Naive thymus-derived CD4-positive, alpha-beta T cell (primary cell): ENCODE measurements at regions of chr1 and their contacts with region 1.

Region 1: GRCh38 chr1:151024540-151025146 is 11.7 kb upstream of the BNIPL start:
- DNase-seq: peak; percentile 72 to 91 (median 83)
- ATAC-seq: peak; percentile 100
- H3K4me3 ChIP-seq: no peak overlapping the region
- H3K4me3 Mint-ChIP-seq: peak overlapping the region; percentile 16 to 73 (median 61)
- H3K27ac ChIP-seq: no peak overlapping the region
- H3K27ac Mint-ChIP-seq: peak overlapping the region; percentile 37 to 93 (median 74)
- H3K4me1 ChIP-seq: no peaks in the 10 kb centered on the region
- H3K4me1 Mint-ChIP-seq: peaks cover 4 to 22% (median 6%) of the 10 kb centered on the region in 7 donors
- H3K27me3 ChIP-seq: no peaks in the 10 kb centered on the region
- H3K27me3 Mint-ChIP-seq: no peaks in the 10 kb centered on the region

Region 2: DNA sequence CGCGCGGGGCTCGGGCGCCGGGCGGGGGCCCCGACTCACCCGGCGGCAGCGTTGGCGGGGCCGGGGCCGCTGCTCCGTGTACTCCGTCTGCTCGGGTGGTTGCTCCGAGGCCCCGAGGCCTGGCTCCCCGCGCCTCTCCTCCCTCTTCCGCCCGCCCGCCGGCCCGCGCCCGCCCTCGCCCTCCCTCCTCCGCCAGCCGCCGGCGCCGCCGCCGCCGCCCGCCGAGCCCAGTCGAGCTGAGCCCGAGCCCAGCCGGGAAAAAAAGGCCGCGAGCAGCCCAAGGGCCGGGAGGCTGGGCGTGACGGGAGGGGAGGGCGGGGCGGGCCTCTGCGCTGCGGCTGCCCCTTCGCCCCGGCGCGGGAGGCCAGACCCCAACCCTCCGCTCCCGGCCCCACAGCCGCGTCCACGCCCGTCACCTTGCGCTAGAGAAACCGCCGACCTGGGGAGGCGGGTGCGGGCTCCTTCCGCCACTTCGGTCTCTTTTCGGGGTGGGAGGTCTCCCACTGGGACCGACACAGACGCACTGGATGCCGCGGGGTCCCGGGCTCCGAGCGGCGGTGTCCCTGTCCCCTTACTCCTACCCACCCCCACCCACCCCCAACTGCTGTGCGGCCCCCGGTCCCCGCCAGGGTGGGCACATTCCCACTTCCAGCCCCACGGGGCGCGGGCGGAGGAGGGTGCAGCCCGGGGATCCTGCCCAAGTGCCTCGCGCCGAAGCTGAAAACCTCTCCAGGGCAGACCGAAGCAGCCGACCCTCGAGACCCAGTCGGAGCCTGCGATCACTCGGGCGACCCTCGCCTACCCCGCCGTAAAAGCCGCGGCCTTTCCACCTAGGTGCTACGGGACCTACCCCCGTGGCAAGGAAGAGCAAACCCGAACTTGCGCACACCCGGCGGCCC is 49.8 kb before region 1 on chr1 and contains the start of gene CERS2:
- CTCF ChIA-PET with region 1: no interaction called
- POLR2A ChIA-PET with region 1: no interaction called
- intact Hi-C with region 1: no loop called
- DNase-seq: peak; percentile 72 to 84 (median 77)
- ATAC-seq: peak; percentile 77
- H3K4me3 ChIP-seq: peak within 1 kb of the TSS; percentile 82
- H3K4me3 Mint-ChIP-seq: peak within 1 kb of the TSS; percentile 83 to 94 (median 89)
- H3K27ac ChIP-seq: peak within 1 kb of the TSS; percentile 92
- H3K27ac Mint-ChIP-seq: peak within 1 kb of the TSS; percentile 86 to 94 (median 91)
- H3K4me1 ChIP-seq: peaks cover 48 to 62% of the 10 kb centered on the region in 2 donors
- H3K4me1 Mint-ChIP-seq: peaks cover 36 to 82% (median 74%) of the 10 kb centered on the region in 7 donors
- H3K27me3 ChIP-seq: no peaks in the 10 kb centered on the region
- H3K27me3 Mint-ChIP-seq: no peaks in the 10 kb centered on the region
- total RNA-seq, gene CERS2: 101 to 169 (median 136) TPM

Region 3: DNA sequence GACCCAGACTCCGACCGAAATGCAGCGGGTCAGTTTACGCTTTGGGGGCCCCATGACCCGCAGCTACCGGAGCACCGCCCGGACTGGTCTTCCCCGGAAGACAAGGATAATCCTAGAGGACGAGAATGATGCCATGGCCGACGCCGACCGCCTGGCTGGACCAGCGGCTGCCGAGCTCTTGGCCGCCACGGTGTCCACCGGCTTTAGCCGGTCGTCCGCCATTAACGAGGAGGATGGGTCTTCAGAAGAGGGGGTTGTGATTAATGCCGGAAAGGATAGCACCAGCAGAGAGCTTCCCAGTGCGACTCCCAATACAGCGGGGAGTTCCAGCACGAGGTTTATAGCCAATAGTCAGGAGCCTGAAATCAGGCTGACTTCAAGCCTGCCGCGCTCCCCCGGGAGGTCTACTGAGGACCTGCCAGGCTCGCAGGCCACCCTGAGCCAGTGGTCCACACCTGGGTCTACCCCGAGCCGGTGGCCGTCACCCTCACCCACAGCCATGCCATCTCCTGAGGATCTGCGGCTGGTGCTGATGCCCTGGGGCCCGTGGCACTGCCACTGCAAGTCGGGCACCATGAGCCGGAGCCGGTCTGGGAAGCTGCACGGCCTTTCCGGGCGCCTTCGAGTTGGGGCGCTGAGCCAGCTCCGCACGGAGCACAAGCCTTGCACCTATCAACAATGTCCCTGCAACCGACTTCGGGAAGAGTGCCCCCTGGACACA is 23.4 kb after region 1 on chr1:
- CTCF ChIA-PET with region 1: interaction called, 17 read pairs
- POLR2A ChIA-PET with region 1: interaction called, 12 read pairs
- intact Hi-C with region 1: loop called (anchors 1 kb)
- DNase-seq: peak; percentile 43 to 64 (median 55)
- ATAC-seq: peak; percentile 86
- H3K4me3 ChIP-seq: peak overlapping the region; percentile 73
- H3K4me3 Mint-ChIP-seq: peak overlapping the region; percentile 85 to 91 (median 90)
- H3K27ac ChIP-seq: peak overlapping the region; percentile 81
- H3K27ac Mint-ChIP-seq: peak overlapping the region; percentile 66 to 96 (median 93)
- H3K4me1 ChIP-seq: peaks cover 15 to 37% of the 10 kb centered on the region in 2 donors
- H3K4me1 Mint-ChIP-seq: peaks cover 37 to 89% (median 71%) of the 10 kb centered on the region in 7 donors
- H3K27me3 ChIP-seq: no peaks in the 10 kb centered on the region
- H3K27me3 Mint-ChIP-seq: no peaks in the 10 kb centered on the region

Region 4: DNA sequence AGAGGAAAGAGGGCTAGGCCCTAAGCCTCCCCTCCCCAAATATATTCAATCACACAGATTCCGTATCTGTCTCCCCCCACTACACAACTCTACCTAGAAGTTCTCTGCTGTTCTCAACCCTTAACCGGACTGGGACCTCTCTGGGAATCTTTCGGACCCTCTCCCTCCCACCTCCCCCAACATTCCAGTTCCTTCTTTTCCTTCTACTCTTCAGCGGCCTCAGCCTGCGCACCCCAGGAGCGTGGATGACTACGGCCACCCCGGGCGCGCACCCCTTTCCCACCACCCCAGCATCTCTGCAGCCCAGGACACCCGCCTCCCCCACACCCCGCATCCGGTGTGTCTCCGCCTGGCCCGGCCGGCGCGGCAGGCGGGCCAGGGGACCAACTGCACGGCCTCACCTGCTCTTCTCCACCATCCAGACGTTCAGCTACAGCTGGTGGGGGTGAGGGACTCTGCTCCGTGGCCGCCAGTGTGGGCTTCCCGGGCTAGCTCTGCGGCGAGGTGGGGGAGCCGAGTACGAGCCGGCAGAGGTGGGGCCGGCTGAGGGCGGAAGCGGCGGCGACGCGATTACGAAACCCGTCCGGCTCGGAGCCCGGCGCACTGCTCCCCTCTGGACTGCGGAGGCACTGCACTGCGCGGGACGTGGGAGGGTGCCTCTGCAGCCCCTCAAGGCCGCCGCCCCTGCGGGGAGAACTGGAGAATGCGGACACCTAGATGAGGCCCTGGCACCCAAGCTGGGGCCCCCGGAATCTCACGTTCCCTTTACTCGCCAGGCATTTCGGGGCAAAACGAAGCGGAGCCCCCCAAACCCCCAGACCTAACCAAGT is 34.6 kb after region 1 on chr1 and contains the start of gene CDC42SE1:
- CTCF ChIA-PET with region 1: interaction called, 74 read pairs
- POLR2A ChIA-PET with region 1: interaction called, 50 read pairs
- intact Hi-C with region 1: loop called (anchors 1 kb)
- DNase-seq: peak; percentile 76 to 85 (median 82)
- ATAC-seq: peak; percentile 84
- H3K4me3 ChIP-seq: peak within 1 kb of the TSS; percentile 82
- H3K4me3 Mint-ChIP-seq: peak within 1 kb of the TSS; percentile 95 to 100 (median 99)
- H3K27ac ChIP-seq: peak within 1 kb of the TSS; percentile 99
- H3K27ac Mint-ChIP-seq: peak within 1 kb of the TSS; percentile 93 to 99 (median 95)
- H3K4me1 ChIP-seq: peaks cover 11 to 26% of the 10 kb centered on the region in 2 donors
- H3K4me1 Mint-ChIP-seq: peaks cover 35 to 55% (median 41%) of the 10 kb centered on the region in 7 donors
- H3K27me3 ChIP-seq: no peaks in the 10 kb centered on the region
- H3K27me3 Mint-ChIP-seq: no peaks in the 10 kb centered on the region
- total RNA-seq, gene CDC42SE1: 362 to 516 (median 425) TPM

Region 5: DNA sequence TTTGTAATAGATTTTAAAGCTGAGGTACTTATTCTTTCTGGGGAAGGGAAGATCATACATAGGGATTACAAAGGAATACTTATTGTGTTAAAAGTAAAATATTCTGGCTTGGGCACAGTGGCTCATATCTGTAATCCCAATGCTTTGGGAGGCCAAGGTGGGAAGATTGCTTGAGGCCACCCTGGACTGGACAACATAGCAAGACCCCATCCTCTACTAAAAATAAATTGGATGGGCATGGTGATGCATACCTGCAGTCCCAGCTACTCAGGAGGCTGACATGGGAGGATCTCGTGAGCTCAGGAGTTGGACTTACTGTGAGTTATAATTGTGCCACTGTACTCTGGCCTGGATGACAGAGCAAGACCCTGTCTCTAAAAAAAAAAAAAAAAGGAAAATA is 73.5 kb after region 1 on chr1:
- CTCF ChIA-PET with region 1: interaction called, 61 read pairs
- POLR2A ChIA-PET with region 1: interaction called, 6 read pairs
- intact Hi-C with region 1: loop called in 1 of 2 experiments (anchors 1 kb)
- DNase-seq: no peak
- ATAC-seq: no peak
- H3K4me3 ChIP-seq: no peak overlapping the region
- H3K4me3 Mint-ChIP-seq: no peak overlapping the region
- H3K27ac ChIP-seq: no peak overlapping the region
- H3K27ac Mint-ChIP-seq: peak overlapping the region in 1 of 9 donors; percentile 25
- H3K4me1 ChIP-seq: no peaks in the 10 kb centered on the region
- H3K4me1 Mint-ChIP-seq: peaks cover 0 to 3% (median 0%) of the 10 kb centered on the region in 7 donors
- H3K27me3 ChIP-seq: no peaks in the 10 kb centered on the region
- H3K27me3 Mint-ChIP-seq: peaks cover 0 to 7% (median 0%) of the 10 kb centered on the region in 5 donors

Region 6: GRCh38 chr1:151189638-151190445 is 165.2 kb after region 1 on chr1 and contains the start of gene VPS72:
- CTCF ChIA-PET with region 1: no interaction called
- POLR2A ChIA-PET with region 1: interaction called, 3 read pairs
- intact Hi-C with region 1: loop called in 1 of 2 experiments (anchors 1 kb)
- DNase-seq: peak; percentile 57 to 90 (median 85)
- ATAC-seq: peak; percentile 98
- H3K4me3 ChIP-seq: peak within 1 kb of the TSS; percentile 80
- H3K4me3 Mint-ChIP-seq: peak within 1 kb of the TSS; percentile 91 to 99 (median 98)
- H3K27ac ChIP-seq: peak within 1 kb of the TSS; percentile 78
- H3K27ac Mint-ChIP-seq: peak within 1 kb of the TSS; percentile 91 to 98 (median 97)
- H3K4me1 ChIP-seq: peaks cover 16% of the 10 kb centered on the region in 2 donors
- H3K4me1 Mint-ChIP-seq: peaks cover 23 to 47% (median 35%) of the 10 kb centered on the region in 7 donors
- H3K27me3 ChIP-seq: no peaks in the 10 kb centered on the region
- H3K27me3 Mint-ChIP-seq: peaks cover 0 to 8% (median 0%) of the 10 kb centered on the region in 5 donors
- total RNA-seq, gene VPS72: 35.1 to 82.0 (median 63.9) TPM

Region 7: DNA sequence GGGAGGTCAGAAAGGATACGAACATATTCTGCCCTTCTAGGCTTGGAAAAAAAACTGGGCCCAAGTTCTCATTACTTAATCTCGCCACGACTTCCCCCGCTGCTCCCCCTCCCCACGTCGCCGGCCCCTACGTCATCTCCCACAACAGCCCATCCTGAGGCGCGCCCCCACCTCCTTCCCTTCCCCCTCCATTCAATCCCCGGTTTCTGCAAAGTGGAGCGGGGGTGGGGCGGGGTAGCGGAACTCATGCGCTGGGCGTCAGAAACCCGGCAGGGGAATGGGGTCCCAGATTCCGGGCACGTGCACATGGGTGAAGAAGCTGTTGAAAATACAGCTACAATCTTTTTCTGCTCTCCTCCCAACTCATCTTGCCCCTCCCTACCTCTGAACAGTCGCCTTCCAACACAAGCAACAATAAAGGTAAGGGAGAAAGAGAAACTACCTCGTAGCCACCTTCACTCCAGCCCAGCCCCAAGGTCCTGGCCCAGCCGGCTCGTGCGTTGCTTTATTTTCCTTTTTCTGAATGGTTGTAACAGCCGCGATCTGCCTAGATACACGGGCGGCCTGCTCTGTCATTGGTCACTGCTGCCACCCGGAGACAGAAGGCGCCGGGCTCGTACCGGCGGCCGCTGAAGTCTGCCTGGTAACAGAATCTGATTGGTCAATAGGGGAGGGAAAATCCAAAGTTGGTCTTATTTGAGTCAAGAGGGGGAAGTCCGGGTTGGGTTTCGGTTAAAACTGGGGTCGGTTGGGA is 322.3 kb after region 1 on chr1 and contains the start of gene RFX5:
- CTCF ChIA-PET with region 1: no interaction called
- POLR2A ChIA-PET with region 1: no interaction called
- intact Hi-C with region 1: loop called in 1 of 2 experiments (anchors 10 kb)
- DNase-seq: peak; percentile 73 to 98 (median 94)
- ATAC-seq: peak; percentile 95
- H3K4me3 ChIP-seq: peak within 1 kb of the TSS; percentile 75
- H3K4me3 Mint-ChIP-seq: peak within 1 kb of the TSS; percentile 85 to 98 (median 95)
- H3K27ac ChIP-seq: peak within 1 kb of the TSS; percentile 96
- H3K27ac Mint-ChIP-seq: peak within 1 kb of the TSS; percentile 95 to 100 (median 99)
- H3K4me1 ChIP-seq: peaks cover 13 to 16% of the 10 kb centered on the region in 2 donors
- H3K4me1 Mint-ChIP-seq: peaks cover 20 to 44% (median 39%) of the 10 kb centered on the region in 7 donors
- H3K27me3 ChIP-seq: no peaks in the 10 kb centered on the region
- H3K27me3 Mint-ChIP-seq: no peaks in the 10 kb centered on the region
- total RNA-seq, gene RFX5: 62.6 to 89.3 (median 82.2) TPM